Dorsolateral prefrontal cortex (tissue), 120 donors: ENCODE measurements at regions of chr15 and their contacts with region 1.

Region 1: GRCh38 chr15:65610871-65611718 is at the start of gene INTS14:
- DNase-seq: peak; percentile 95 to 98 (median 97)
- H3K4me3 ChIP-seq: peak within 1 kb of the TSS; percentile 68 to 99 (median 91)
- H3K27ac ChIP-seq: peak within 1 kb of the TSS; percentile 66 to 98 (median 92)
- H3K27me3 ChIP-seq: no peaks in the 10 kb centered on the region
- CTCF ChIP-seq: peak; percentile 59 to 98 (median 88)
- total RNA-seq, gene INTS14: 16.3 to 35.6 (median 23.7) TPM

Region 2: DNA sequence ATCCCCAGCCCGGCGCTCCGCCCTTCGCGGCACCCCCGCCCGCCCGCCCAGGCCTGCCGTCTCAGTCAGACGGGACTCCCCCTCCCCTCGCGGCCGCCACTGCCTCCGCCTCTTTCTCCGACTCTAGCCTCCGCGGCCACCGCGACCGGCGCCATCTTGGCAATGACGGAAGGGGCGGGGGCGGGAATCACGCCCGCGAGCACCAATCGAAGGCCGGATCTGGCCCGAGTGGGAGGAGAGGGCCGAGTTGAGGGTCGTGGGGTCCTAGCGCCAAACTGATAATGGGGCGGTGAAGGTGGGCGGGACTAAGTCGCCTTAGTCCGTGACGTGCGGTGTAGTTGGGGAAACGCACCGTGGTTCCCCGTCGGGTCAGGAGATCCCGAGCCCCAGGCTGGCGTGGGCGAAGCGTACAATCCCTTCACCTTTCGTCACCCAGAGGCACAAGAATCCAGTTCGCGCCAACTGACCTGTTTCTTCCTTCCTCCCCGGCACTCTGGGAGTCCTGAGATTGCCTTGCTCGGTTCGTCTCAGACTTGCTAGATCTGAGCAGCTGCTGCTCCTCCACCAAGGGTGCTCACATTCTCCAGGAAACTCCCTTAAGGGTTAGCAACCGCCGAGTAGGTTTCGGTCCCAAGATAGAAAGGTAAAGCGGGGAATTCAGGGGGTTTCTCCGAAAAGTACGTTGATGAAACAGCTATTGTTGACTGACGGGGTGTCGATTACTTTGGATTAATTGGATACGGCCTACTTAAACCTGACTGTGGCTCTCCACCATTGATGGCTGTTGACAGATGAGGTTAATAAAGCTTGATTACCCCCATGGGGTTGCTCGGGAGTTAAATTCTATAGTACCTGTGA is 181.3 kb after region 1 on chr15 and contains the start of gene DENND4A:
- intact Hi-C with region 1: loop called (anchors 1 to 10 kb)
- DNase-seq: peak; percentile 94 to 98 (median 97)
- H3K4me3 ChIP-seq: peak within 1 kb of the TSS; percentile 48 to 95 (median 85)
- H3K27ac ChIP-seq: peak within 1 kb of the TSS; percentile 44 to 99 (median 97)
- H3K27me3 ChIP-seq: no peaks in the 10 kb centered on the region
- CTCF ChIP-seq: peak in 17 of 56 donors; percentile 2 to 50 (median 26)
- total RNA-seq, gene DENND4A: 52.0 to 89.8 (median 72.2) TPM

Region 3: DNA sequence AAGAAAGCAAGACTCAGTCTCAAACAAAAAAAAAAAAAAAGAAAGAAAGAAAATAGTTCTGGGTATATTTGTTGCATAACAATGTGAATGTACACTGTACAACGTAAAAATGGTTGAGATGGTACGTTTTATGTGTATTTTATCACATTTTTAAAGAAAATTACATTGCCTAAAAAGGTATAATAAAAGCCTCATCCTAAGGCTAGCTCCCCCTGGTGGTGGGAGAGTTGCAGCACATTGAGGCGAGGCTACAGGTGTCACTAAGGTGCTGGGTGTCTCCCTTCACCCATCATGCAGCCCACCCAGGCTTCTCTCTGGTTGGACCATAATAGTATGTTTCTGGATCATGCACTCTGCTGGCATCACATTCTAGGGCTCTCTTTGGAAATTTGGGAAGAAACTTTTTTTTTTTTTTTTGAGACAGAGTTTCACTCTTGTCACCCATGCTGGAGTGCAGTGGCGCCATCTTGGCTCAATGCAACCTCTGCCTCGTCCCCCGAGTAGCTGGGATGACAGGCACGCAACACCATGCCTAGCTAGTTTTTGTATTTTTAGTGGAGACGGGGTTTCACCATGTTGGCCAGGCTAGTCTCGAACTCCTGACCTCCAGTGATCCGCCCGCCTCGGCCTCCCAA is 245.8 kb after region 1 on chr15:
- intact Hi-C with region 1: loop called in 1 of 2 experiments (anchors 2 kb)
- DNase-seq: peak in 5 of 10 donors; percentile 15 to 63 (median 33)
- H3K4me3 ChIP-seq: no peak overlapping the region
- H3K27ac ChIP-seq: no peak overlapping the region
- H3K27me3 ChIP-seq: no peaks in the 10 kb centered on the region
- CTCF ChIP-seq: peak in 55 of 56 donors; percentile 36 to 83 (median 71)

Region 4: GRCh38 chr15:65869127-65869953 is 258.2 kb after region 1 on chr15 and contains the start of gene RAB11A:
- intact Hi-C with region 1: loop called in 1 of 2 experiments (anchors 2 kb)
- DNase-seq: peak; percentile 92 to 98 (median 96)
- H3K4me3 ChIP-seq: peak within 1 kb of the TSS; percentile 55 to 100 (median 95)
- H3K27ac ChIP-seq: peak within 1 kb of the TSS; percentile 69 to 100 (median 97)
- H3K27me3 ChIP-seq: no peaks in the 10 kb centered on the region
- CTCF ChIP-seq: peak in 54 of 56 donors; percentile 32 to 81 (median 58)
- total RNA-seq, gene RAB11A: 88.8 to 241 (median 186) TPM